ENCODE measurements at regions of chr4 and their contacts with region 1.

Region 1: GRCh38 chr4:13627606-13628301 is at the start of gene BOD1L1:
- DNase-seq: peak; percentile 80
- ATAC-seq: peak; percentile 86
- H3K4me3 Mint-ChIP-seq: peak within 1 kb of the TSS; percentile 98
- H3K27ac Mint-ChIP-seq: peak within 1 kb of the TSS; percentile 97
- H3K4me1 Mint-ChIP-seq: peaks cover 53% of the 10 kb centered on the region
- H3K27me3 Mint-ChIP-seq: no peaks in the 10 kb centered on the region
- CTCF ChIP-seq: no peak
- total RNA-seq, gene BOD1L1: 77.1 and 79.3 TPM in 2 replicates

Region 2: GRCh38 chr4:13484122-13484748 is 143.5 kb before region 1 on chr4 and contains the start of gene RAB28:
- CTCF ChIA-PET with region 1: no interaction called
- POLR2A ChIA-PET with region 1: interaction called, 3 read pairs
- intact Hi-C with region 1: loop called (anchors 1 kb)
- DNase-seq: peak; percentile 93
- ATAC-seq: peak; percentile 93
- H3K4me3 Mint-ChIP-seq: peak within 1 kb of the TSS; percentile 96
- H3K27ac Mint-ChIP-seq: peak within 1 kb of the TSS; percentile 99
- H3K4me1 Mint-ChIP-seq: peaks cover 21% of the 10 kb centered on the region
- H3K27me3 Mint-ChIP-seq: peaks cover 14% of the 10 kb centered on the region
- CTCF ChIP-seq: no peak
- total RNA-seq, gene RAB28: 16.0 and 16.9 TPM in 2 replicates

Region 3: GRCh38 chr4:13580036-13580435 is 47.7 kb before region 1 on chr4:
- CTCF ChIA-PET with region 1: no interaction called
- POLR2A ChIA-PET with region 1: no interaction called
- intact Hi-C with region 1: no loop called
- DNase-seq: no peak
- ATAC-seq: no peak
- H3K4me3 Mint-ChIP-seq: no peak overlapping the region
- H3K27ac Mint-ChIP-seq: no peak overlapping the region
- H3K4me1 Mint-ChIP-seq: no peaks in the 10 kb centered on the region
- H3K27me3 Mint-ChIP-seq: no peaks in the 10 kb centered on the region
- CTCF ChIP-seq: no peak

Region 4: DNA sequence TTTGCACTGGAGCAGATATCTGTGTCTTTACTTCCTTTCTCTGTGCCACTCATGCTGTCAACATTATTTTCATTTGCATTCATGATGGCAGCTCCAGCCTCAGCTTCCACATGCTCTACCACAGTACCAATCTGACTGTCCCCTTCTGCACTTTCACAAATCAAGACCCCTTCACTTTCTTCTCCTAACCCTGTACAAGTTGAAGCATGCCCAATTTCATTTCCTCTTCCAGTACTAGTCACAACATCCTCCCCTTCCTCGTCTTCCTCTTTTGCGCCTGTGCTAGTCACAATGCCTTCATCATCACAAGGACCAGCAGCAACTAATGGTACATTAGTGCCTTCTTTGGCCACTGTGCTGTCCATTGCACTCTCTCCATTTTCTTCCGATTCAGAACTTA is 26.7 kb before region 1 on chr4:
- CTCF ChIA-PET with region 1: no interaction called
- POLR2A ChIA-PET with region 1: interaction called, 11 read pairs
- intact Hi-C with region 1: loop called (anchors 1 kb)
- DNase-seq: no peak
- ATAC-seq: peak; percentile 96
- H3K4me3 Mint-ChIP-seq: peak overlapping the region; percentile 48
- H3K27ac Mint-ChIP-seq: peak overlapping the region; percentile 76
- H3K4me1 Mint-ChIP-seq: peaks cover 34% of the 10 kb centered on the region
- H3K27me3 Mint-ChIP-seq: no peaks in the 10 kb centered on the region
- CTCF ChIP-seq: no peak

Region 5: GRCh38 chr4:13611283-13611842 is 16.4 kb before region 1 on chr4:
- CTCF ChIA-PET with region 1: interaction called, 3 read pairs
- POLR2A ChIA-PET with region 1: interaction called, 42 read pairs
- intact Hi-C with region 1: loop called (anchors 1 kb)
- DNase-seq: no peak
- ATAC-seq: peak; percentile 90
- H3K4me3 Mint-ChIP-seq: peak overlapping the region; percentile 62
- H3K27ac Mint-ChIP-seq: peak overlapping the region; percentile 88
- H3K4me1 Mint-ChIP-seq: peaks cover 57% of the 10 kb centered on the region
- H3K27me3 Mint-ChIP-seq: no peaks in the 10 kb centered on the region
- CTCF ChIP-seq: no peak

Region 6: DNA sequence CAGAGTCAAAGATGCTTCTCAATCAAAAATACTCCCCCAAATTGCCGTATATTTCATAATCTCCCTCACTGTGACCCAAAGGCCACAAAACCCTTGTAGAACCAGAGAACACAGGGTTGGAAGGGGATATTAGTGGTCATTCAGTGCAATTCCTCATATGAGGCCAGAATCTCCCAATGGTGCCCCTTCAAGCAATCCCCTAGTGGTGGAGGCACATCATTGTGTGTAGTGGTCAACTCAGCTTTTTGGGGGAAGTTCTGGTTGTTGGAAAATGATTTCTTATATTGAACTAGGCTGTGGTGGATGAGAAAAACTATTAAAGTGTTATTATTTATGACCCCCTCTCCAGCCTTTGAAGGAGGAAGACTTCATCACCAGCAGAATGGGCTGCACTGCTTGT is 17.3 kb after region 1 on chr4:
- CTCF ChIA-PET with region 1: no interaction called
- POLR2A ChIA-PET with region 1: no interaction called
- intact Hi-C with region 1: no loop called
- DNase-seq: no peak
- ATAC-seq: no peak
- H3K4me3 Mint-ChIP-seq: no peak overlapping the region
- H3K27ac Mint-ChIP-seq: no peak overlapping the region
- H3K4me1 Mint-ChIP-seq: no peaks in the 10 kb centered on the region
- H3K27me3 Mint-ChIP-seq: peaks cover 30% of the 10 kb centered on the region
- CTCF ChIP-seq: no peak

Region 7: DNA sequence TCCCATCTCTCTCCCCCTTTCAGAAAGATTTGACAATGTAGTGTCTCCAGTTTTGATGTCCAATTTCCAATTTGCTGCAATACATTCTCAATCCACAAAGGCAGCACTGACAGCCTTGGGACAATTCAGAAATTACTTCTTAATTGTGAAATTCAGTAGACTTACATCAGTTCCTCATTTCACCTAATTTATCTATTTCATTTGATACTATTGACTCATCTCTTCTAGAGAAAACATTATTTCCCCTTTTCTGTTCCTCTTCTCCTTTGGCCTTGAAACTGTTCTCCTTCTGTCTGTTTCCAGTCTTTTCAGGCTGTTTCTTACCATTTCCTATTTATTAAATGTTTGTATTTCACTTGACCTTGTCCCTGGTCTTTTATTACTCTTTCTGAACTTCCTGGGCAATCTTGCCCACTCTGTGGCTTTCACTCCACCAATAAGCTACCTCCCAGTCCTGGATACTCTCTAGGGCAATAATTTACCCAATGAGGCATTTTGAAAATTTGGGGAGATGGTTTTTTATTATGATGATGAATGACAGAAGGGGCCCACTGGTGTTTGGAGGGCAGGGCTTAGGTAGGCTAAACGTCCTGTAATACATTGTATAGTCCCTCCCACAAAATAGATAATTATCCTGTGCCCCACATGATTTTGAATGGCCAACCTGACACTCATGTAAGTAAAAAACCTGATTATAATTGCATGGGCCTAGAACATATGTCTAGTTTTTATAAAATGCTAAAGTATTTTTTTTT is 497.8 kb after region 1 on chr4:
- CTCF ChIA-PET with region 1: no interaction called
- POLR2A ChIA-PET with region 1: no interaction called
- intact Hi-C with region 1: loop called (anchors 5 kb)
- DNase-seq: no peak
- ATAC-seq: peak; percentile 90
- H3K4me3 Mint-ChIP-seq: peak overlapping the region; percentile 59
- H3K27ac Mint-ChIP-seq: peak overlapping the region; percentile 84
- H3K4me1 Mint-ChIP-seq: peaks cover 27% of the 10 kb centered on the region
- H3K27me3 Mint-ChIP-seq: no peaks in the 10 kb centered on the region
- CTCF ChIP-seq: no peak

Region 8: DNA sequence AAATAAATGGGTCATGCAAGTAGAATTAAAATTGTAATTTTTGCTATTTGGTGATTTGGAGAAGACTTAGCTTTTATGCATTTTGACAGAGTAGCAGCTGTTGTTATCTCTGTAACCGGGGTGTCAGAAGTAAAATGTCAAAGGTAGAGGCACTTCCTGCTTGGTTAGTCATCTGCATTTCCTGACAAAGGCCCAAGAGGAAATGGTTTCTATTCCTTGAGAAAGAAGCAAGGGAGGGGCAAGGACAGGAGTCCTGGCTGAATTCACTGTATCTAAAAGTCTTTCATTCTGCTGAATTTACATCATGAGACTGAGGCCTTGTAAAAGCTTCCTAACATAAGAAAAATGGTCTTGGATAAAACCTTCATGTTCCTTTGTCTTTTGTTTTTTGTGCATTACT is 550.7 kb after region 1 on chr4:
- CTCF ChIA-PET with region 1: no interaction called
- POLR2A ChIA-PET with region 1: no interaction called
- intact Hi-C with region 1: loop called (anchors 1 kb)
- DNase-seq: no peak
- ATAC-seq: peak; percentile 62
- H3K4me3 Mint-ChIP-seq: peak overlapping the region; percentile 67
- H3K27ac Mint-ChIP-seq: peak overlapping the region; percentile 89
- H3K4me1 Mint-ChIP-seq: peaks cover 85% of the 10 kb centered on the region
- H3K27me3 Mint-ChIP-seq: no peaks in the 10 kb centered on the region
- CTCF ChIP-seq: no peak

Measured in activated B cell treated with CpG ODN at 0.5 μM for 24 hours (primary cell).